Activated naive CD4-positive, alpha-beta T cell treated with anti-CD3 and anti-CD28 coated beads for 36 hours (primary cell): ENCODE measurements at regions of chr1 and their contacts with region 1.

Region 1: DNA sequence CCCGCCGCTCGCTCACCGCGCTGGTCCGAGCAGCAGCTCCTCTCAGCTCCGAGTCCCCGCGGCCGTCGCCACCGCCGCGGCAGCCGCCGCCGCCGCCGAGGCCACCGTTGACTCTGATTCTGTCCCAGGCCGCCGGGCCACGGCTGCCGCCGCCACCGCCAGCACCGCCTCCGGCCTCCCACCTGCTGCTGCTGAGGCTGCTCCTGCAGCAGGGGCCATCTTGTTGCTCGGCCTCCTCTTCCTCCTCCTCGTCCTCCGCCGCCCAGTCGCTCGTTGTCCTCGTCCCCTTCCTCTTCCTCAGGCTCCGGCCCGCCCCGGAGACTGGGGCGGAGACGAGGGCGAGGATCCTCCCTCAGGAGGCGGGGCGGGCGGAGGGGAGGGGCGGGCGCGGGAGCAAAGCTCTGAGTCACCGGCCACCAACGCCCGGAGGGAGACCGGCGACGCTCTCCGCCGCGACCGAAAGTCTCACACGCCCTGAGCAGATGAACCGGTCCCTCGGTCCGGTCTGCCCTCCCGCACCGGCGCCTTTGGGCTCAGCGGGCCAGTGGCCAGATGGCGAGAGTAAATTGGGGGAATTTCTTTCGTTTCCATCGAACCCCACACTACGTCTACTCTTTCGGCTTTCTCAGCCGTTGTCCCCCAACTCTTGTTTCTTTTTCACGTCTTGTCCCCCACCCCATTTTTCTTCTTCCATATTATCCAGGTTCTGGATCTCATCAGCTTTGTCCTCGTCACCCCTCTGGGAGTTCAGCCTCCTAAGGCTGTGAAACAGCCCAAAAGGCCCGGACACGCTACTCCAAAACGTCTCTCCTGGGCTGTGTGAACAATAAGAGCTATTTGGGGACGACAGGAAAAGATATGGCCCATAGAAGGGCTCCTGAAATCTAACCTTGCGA is at the start of gene RC3H1:
- DNase-seq: peak; percentile 92
- H3K4me3 Mint-ChIP-seq: peak within 1 kb of the TSS; percentile 93
- H3K27ac Mint-ChIP-seq: peak within 1 kb of the TSS; percentile 94
- H3K4me1 Mint-ChIP-seq: peaks cover 32% of the 10 kb centered on the region
- H3K27me3 Mint-ChIP-seq: no peaks in the 10 kb centered on the region
- total RNA-seq, gene RC3H1: 24.2 to 27.1 TPM

Region 2: DNA sequence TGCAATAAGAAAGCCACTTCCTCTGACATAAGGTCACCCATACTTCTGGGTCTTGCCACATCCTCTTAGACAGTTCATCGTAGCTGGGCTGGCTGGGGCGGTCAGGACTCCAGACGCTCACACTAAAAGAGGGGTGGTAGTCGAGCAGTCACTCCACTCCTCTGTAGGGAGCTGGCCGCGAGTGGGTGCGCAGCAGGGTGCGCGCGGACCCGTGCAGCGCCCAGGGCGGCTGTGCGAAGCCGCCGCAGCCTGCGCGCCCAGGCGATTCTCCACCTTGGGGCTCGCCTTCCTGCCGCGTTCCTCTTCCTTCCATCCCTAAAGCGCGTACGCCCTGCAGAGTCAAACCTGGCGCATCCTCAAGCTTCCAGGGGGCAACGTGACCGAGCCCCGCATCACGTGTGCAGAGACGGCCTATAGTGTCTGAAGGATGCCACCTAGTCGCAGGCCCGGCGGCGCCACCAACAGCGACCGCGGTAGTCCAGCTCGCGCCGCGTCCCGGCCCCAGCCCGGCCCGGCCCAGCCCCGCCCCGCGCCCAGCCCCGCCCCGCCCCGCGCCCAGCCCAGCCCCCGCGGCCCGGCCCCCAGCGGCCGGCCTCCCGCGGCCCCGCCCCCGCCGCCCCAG is 545.6 kb before region 1 on chr1:
- CTCF ChIA-PET with region 1: no interaction called
- intact Hi-C with region 1: loop called (anchors 2 kb)
- DNase-seq: peak; percentile 86
- H3K4me3 Mint-ChIP-seq: peak overlapping the region; percentile 91
- H3K27ac Mint-ChIP-seq: peak overlapping the region; percentile 93
- H3K4me1 Mint-ChIP-seq: peaks cover 58% of the 10 kb centered on the region
- H3K27me3 Mint-ChIP-seq: no peaks in the 10 kb centered on the region

Region 3: GRCh38 chr1:173714759-173715537 is 307.4 kb before region 1 on chr1 and contains the start of gene KLHL20:
- CTCF ChIA-PET with region 1: no interaction called
- intact Hi-C with region 1: loop called (anchors 1 kb)
- DNase-seq: peak; percentile 91
- H3K4me3 Mint-ChIP-seq: peak within 1 kb of the TSS; percentile 97
- H3K27ac Mint-ChIP-seq: peak within 1 kb of the TSS; percentile 96
- H3K4me1 Mint-ChIP-seq: peaks cover 9% of the 10 kb centered on the region
- H3K27me3 Mint-ChIP-seq: peaks cover 15% of the 10 kb centered on the region
- total RNA-seq, gene KLHL20: 13.0 to 14.9 TPM

Region 4: DNA sequence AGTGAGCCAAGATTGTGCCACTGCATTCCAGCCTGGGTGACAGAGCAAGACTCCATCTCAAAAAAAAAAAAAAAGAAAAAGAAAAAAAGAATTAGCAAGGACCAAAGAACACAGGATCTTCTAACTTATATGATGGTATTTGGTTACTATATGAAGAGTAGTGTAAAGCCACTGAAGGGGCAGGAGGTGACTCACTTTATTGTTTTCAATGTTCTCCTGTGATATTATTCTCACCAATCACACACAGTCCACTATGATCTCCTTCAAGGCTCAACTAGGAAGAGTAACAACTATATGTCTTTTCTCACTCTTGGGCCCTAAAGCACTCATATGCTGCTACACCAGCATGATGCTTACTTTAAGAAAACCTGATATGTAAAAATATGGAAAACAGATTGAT is 26.9 kb before region 1 on chr1:
- CTCF ChIA-PET with region 1: no interaction called
- intact Hi-C with region 1: loop called (anchors 2 kb)
- DNase-seq: no peak
- H3K4me3 Mint-ChIP-seq: no peak overlapping the region
- H3K27ac Mint-ChIP-seq: no peak overlapping the region
- H3K4me1 Mint-ChIP-seq: peaks cover 26% of the 10 kb centered on the region
- H3K27me3 Mint-ChIP-seq: no peaks in the 10 kb centered on the region

Region 5: GRCh38 chr1:174114788-174115448 is 92.6 kb after region 1 on chr1:
- CTCF ChIA-PET with region 1: no interaction called
- intact Hi-C with region 1: no loop called
- DNase-seq: peak; percentile 26
- H3K4me3 Mint-ChIP-seq: no peak overlapping the region
- H3K27ac Mint-ChIP-seq: no peak overlapping the region
- H3K4me1 Mint-ChIP-seq: peaks cover 2% of the 10 kb centered on the region
- H3K27me3 Mint-ChIP-seq: no peaks in the 10 kb centered on the region

Region 6: DNA sequence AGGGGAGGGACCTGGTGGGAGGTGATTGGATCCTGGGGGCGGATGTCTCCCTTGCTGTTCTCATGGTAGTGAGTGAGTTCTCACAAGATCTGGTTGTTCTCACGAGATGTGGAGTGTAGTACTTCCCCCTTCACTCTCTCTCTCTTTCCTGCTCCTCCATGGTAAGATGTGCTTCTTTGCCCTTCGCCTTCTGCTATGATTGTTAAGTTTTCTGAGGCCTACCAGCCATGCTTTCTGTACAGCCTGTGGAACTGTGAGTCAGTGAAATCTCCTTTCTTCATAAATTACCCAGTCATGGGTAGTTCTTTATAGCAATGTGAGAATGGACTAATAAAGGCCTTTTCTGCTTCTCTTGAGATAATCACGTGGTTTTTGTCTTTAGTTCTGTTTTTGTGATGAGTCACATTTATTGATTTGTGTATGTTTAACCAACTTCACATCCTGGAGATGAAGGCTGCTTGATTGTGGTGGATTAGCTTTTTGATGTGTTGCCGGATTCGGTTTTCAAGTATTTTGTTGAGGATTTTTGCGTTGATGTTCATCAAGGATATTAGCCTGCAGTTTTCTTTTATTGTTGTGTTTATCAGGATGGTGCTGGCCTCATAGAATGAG is 182.5 kb after region 1 on chr1:
- CTCF ChIA-PET with region 1: no interaction called
- intact Hi-C with region 1: loop called (anchors 5 kb)
- DNase-seq: peak; percentile 25
- H3K4me3 Mint-ChIP-seq: no peak overlapping the region
- H3K27ac Mint-ChIP-seq: peak overlapping the region; percentile 55
- H3K4me1 Mint-ChIP-seq: peaks cover 48% of the 10 kb centered on the region
- H3K27me3 Mint-ChIP-seq: no peaks in the 10 kb centered on the region